ENCODE measurements at regions of chr7 and their contacts with region 1.

Region 1: GRCh38 chr7:134646425-134647305 is at the start of gene BPGM:
- DNase-seq: peak; percentile 99
- H3K4me3 Mint-ChIP-seq: no peak within 1 kb of the TSS
- H3K27ac Mint-ChIP-seq: no peak within 1 kb of the TSS
- H3K4me1 Mint-ChIP-seq: peaks cover 37% of the 10 kb centered on the region
- H3K27me3 Mint-ChIP-seq: no peaks in the 10 kb centered on the region
- total RNA-seq, gene BPGM: 13.9 to 14.2 TPM

Region 2: GRCh38 chr7:134254311-134254710 is 392.4 kb before region 1 on chr7:
- CTCF ChIA-PET with region 1: no interaction called
- intact Hi-C with region 1: no loop called
- DNase-seq: no peak
- H3K4me3 Mint-ChIP-seq: no peak overlapping the region
- H3K27ac Mint-ChIP-seq: no peak overlapping the region
- H3K4me1 Mint-ChIP-seq: no peaks in the 10 kb centered on the region
- H3K27me3 Mint-ChIP-seq: no peaks in the 10 kb centered on the region

Region 3: GRCh38 chr7:134669845-134670373 is 23.2 kb after region 1 on chr7:
- CTCF ChIA-PET with region 1: interaction called, 5 read pairs
- intact Hi-C with region 1: loop called (anchors 1 kb)
- DNase-seq: peak; percentile 88
- H3K4me3 Mint-ChIP-seq: peak overlapping the region; percentile 65
- H3K27ac Mint-ChIP-seq: peak overlapping the region; percentile 85
- H3K4me1 Mint-ChIP-seq: peaks cover 52% of the 10 kb centered on the region
- H3K27me3 Mint-ChIP-seq: no peaks in the 10 kb centered on the region

Region 4: GRCh38 chr7:134854816-134855215 is 208.2 kb after region 1 on chr7:
- CTCF ChIA-PET with region 1: no interaction called
- intact Hi-C with region 1: loop called (anchors 2 kb)
- DNase-seq: peak; percentile 65
- H3K4me3 Mint-ChIP-seq: no peak overlapping the region
- H3K27ac Mint-ChIP-seq: peak overlapping the region; percentile 7
- H3K4me1 Mint-ChIP-seq: peaks cover 47% of the 10 kb centered on the region
- H3K27me3 Mint-ChIP-seq: no peaks in the 10 kb centered on the region

Region 5: DNA sequence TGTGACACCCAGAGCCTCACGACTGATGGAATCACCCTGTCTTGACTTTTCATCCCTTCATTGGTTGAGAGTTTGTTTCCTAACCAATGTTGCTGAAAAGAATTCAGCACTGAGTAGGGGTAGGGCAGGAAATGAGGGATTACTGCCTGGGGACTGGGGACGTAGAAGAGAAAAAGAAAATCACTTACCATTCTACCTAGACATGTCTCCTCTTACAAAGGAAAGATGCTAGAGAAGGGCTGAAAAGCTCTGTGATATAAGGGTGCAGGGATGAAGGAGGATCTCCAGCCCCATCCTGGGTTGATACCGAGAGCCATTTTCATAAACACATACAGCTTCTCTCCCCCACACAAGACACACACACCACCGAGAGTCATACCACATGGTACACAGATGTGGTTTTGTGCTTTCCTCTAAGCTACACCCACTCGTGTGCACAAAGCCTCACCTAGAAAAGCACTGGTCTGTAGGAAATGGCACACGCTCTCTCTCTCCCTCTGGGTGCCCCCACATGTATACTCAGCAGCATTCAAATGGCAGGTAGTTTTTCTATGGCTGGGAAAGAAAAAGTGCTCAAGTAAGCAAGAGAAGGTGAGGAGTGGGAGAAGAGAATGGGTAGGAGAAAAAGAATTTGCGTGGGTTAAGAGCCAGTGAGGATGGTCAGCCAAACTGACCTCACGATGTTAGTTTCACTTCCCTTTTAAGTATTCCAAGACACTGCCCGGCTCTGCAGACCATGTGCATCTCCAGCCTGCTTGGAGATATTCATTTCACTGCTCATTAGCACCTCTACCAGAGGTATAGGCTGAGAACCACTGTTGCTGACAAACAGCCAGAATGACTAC is 218.6 kb after region 1 on chr7:
- CTCF ChIA-PET with region 1: no interaction called
- intact Hi-C with region 1: loop called (anchors 2 kb)
- DNase-seq: peak; percentile 62
- H3K4me3 Mint-ChIP-seq: peak overlapping the region; percentile 65
- H3K27ac Mint-ChIP-seq: peak overlapping the region; percentile 77
- H3K4me1 Mint-ChIP-seq: peaks cover 39% of the 10 kb centered on the region
- H3K27me3 Mint-ChIP-seq: no peaks in the 10 kb centered on the region

Region 6: DNA sequence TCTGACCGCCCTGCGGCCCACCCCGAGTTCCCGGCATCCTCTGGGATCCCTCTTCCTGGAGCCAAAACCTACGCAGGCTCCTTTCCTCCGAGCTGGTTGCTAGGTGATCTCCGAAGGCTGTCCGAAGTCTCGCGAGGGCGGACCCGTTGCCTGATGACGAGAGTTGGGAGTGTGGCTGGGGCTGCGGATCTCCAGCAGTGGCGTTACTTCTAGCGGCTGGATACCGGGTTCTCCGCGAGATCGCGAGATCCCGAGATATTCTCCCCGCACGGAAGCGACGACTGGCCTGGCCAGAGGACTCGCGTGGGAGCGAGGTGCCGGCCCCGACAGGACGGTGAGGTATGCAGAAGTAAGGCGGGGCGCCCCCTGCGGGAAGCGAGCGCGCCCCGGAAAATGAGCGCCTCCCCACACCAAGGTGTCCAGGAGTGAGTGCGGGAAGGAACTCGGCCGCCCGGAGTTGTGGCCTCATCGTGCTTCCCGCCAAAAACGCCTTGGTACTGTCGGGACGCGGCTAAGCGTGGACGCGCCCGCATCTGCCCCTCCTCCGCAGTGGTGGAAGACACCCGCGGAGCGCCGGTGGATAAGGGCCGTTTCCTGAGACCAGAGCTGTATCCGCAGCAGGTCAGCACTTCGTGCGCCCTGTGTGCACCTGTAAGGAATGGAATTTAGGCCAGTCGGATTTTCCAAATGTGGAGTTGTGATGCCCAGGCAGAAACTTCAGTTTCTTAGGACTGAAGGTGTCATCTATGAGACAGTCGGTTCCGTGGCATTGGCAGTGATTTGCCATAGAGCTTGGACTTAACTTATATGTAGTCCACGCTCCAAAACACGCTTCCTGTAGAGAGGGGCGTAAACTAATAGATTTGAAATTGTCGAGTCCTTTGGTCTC is 339.9 kb after region 1 on chr7 and contains the start of gene AGBL3:
- CTCF ChIA-PET with region 1: no interaction called
- intact Hi-C with region 1: loop called (anchors 1 kb)
- DNase-seq: peak; percentile 97
- H3K4me3 Mint-ChIP-seq: peak within 1 kb of the TSS; percentile 96
- H3K27ac Mint-ChIP-seq: peak within 1 kb of the TSS; percentile 98
- H3K4me1 Mint-ChIP-seq: peaks cover 32% of the 10 kb centered on the region
- H3K27me3 Mint-ChIP-seq: no peaks in the 10 kb centered on the region
- total RNA-seq, gene AGBL3: 2.6 to 3.6 TPM

Region 7: DNA sequence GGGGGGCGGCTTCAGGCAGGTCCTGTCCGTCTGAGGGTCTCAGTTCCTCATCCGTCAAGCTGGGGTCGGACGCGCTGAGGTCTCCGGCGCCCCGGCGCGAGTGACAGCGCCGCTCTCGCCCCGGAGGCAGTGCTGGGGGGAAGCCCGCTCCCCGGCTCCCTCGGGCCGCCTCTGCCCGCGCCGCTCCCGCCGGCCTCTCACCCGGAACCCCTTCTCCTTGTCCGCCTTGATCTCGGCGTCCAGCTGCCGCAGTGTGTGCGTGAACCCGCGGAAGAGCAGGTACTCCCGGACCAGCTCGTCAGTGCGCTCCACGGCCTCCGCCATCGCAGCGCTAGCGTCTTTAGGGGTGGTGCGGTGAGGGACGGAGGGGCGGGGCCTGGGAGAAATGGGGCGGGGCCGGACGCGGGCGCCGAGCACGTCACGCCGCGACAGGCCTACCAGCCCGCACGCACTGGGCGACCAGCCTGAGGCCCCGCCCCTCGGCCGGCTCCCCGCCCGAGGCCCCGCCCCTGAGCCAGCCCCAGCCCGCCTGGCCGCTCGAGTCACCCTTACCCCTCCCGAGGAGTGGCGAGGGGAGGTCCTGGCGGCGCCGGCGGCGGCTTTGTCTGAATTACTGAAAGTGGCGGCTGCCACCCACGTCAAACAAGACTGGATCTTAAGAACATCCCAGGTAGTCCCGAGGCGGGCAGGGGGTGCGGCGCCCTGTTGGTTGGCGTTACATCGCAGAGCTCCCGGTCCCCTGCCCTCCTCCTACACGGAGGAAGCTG is 564.7 kb after region 1 on chr7 and contains the start of gene WDR91:
- CTCF ChIA-PET with region 1: no interaction called
- intact Hi-C with region 1: loop called (anchors 1 kb)
- DNase-seq: peak; percentile 96
- H3K4me3 Mint-ChIP-seq: peak within 1 kb of the TSS; percentile 98
- H3K27ac Mint-ChIP-seq: peak within 1 kb of the TSS; percentile 85
- H3K4me1 Mint-ChIP-seq: peaks cover 41% of the 10 kb centered on the region
- H3K27me3 Mint-ChIP-seq: no peaks in the 10 kb centered on the region
- total RNA-seq, gene WDR91: 10.6 to 11.1 TPM

Region 8: DNA sequence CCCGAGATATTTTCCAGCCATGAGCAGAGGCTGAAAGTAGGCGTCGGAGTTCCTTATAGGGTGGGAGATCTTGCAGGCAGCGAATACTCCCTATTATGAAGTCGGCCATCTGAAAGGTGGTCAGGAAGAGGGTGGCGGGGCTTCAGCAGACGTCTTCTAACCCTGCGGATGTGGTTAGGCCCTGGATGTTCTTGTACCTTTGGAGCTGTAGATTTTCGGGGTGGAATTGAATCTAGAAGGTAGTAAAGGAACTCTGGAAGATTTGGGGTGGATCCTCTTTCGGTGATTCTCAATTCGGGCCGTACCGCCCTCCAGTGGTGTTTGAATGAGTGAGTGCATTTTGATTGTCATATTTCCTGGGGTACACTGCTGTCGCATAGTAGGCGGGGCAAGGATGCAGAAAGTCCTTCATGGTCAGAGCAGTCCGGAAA is 911.7 kb after region 1 on chr7:
- CTCF ChIA-PET with region 1: no interaction called
- intact Hi-C with region 1: loop called (anchors 2 kb)
- DNase-seq: peak; percentile 79
- H3K4me3 Mint-ChIP-seq: no peak overlapping the region
- H3K27ac Mint-ChIP-seq: no peak overlapping the region
- H3K4me1 Mint-ChIP-seq: peaks cover 29% of the 10 kb centered on the region
- H3K27me3 Mint-ChIP-seq: no peaks in the 10 kb centered on the region

Measured in activated naive CD4-positive, alpha-beta T cell treated with anti-CD3 and anti-CD28 coated beads for 36 hours (primary cell).